ENCODE measurements at regions of chr14 and their contacts with region 1.

Region 1: DNA sequence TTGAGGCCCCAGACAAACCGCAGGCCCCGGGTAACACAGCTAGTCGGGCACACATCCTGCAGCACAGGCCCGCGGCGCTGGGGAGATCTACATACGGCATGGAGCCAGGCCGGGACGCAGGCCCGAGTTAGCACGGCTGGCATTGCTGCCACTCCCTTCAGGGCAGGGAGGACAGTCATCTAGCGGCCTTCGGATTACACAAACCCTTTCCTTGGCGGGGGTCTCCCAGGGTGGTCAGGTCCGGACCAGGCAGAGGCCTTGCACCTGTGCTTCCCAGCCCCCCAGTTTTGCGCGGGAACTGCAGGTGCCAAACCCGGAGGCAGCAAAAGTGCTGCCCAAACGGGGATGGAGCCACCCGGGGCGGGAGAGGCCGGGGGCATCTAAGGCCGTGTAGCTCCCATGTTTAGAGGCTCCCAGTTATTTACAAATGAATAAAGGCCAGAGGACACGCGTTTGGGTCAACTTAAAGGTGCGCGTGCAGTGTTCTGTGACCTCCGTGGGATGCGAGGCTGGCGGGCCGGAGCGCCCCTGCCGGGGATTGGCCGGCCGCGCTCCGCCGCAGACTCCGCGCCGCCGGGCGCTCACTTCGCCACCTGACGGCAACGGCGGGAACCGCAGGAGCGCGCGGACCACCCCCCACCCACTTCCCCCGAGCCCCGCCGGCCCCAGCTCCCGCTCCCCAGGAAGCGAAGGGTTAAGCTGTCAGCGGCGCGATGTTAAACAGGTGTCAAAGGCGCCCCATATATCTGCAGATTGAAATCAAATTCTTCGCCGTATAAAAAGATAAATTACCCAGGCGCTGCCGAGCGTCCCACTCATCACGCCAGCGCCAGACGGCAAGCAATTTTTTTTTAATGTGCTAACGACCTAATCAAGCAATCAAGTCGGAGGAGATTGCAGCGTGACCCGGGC is 18.1 kb downstream of the VSX2 start:
- DNase-seq: no peak
- H3K4me3 ChIP-seq: peak overlapping the region; percentile 58
- CTCF ChIP-seq: peak; percentile 80

Region 2: GRCh38 chr14:72350215-72350614 is 1907.1 kb before region 1 on chr14:
- CTCF ChIA-PET with region 1: no interaction called
- POLR2A ChIA-PET with region 1: no interaction called
- DNase-seq: no peak
- H3K4me3 ChIP-seq: no peak overlapping the region
- CTCF ChIP-seq: no peak

Region 3: DNA sequence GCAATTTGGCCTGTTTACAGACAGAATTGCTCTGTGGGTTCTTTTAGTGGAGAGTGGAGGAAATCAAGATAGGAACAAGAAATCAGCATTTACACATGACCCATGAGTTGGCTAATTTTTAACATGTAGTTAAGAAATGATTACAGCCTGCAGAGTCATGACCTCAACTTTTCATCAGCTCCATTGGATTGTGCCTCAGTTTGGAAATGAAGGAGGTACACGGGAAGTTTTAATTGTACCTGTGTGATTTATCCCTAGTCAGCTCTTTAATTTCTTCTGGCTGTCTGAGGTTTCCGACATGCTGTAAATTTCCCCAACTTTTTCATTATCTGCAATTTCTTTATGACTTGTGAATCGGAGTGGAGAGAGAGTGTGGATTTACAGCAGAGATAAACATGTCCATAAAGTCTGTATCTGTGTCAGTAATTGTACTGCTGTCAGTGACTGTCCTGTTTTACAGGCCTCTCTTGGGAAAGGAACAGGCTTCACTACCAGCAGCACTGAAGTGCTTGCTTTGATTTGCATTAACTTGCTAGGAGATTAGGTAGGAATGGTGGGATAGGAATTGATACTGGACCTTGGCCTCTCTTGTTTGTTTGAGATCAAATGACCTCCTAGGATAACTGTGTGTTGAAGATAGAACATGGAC is 123.4 kb before region 1 on chr14:
- CTCF ChIA-PET with region 1: interaction called, 11 read pairs
- POLR2A ChIA-PET with region 1: no interaction called
- DNase-seq: no peak
- H3K4me3 ChIP-seq: no peak overlapping the region
- CTCF ChIP-seq: no peak

Region 4: DNA sequence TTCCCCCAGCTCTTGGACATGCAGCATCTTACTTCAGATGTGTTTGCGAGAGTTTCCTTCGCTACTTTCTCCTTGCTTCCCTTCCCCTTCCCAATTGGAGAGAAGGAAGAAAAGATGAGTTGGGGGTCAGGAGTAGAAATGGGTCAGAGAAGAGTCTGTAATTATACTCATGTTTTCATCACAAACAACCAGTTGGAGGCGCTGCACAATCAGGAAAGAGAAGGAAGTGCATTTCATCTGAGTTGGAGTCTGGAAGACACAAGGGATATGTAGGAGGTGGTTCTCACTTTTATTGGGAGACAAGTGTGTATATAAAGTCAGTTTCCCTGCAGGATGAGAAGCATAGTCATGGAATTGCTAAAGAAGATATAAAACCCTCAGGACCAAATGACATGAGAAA is 49.4 kb before region 1 on chr14:
- CTCF ChIA-PET with region 1: interaction called, 12 read pairs
- POLR2A ChIA-PET with region 1: no interaction called
- DNase-seq: no peak
- H3K4me3 ChIP-seq: no peak overlapping the region
- CTCF ChIP-seq: no peak

Region 5: GRCh38 chr14:74223016-74223415 is 34.3 kb before region 1 on chr14:
- CTCF ChIA-PET with region 1: interaction called, 20 read pairs
- POLR2A ChIA-PET with region 1: no interaction called
- DNase-seq: no peak
- H3K4me3 ChIP-seq: no peak overlapping the region
- CTCF ChIP-seq: no peak

Region 6: DNA sequence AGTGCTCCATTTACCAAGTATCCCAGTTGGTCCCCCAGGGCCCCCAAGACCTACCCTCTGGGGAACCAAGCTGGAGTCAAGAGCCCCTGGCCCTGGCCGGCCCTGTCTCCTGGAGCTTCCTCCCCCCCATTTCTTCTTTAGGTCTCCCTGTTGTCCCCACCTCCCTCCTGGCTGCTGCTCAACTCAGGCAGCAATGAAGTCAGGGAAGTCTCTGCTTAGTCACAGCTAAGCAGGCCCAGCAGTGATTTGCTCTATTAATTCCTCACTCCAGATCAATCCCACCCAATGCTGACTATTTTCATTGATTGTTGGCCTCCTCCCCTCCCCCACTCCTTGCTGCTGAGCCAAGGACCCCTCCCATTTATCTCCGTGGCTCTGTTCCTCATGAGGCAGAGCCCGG is 10.3 kb after region 1 on chr14:
- CTCF ChIA-PET with region 1: interaction called, 101 read pairs
- POLR2A ChIA-PET with region 1: no interaction called
- DNase-seq: no peak
- H3K4me3 ChIP-seq: no peak overlapping the region
- CTCF ChIP-seq: no peak

Region 7: GRCh38 chr14:74281069-74281468 is 23.7 kb after region 1 on chr14:
- CTCF ChIA-PET with region 1: interaction called, 14 read pairs
- POLR2A ChIA-PET with region 1: no interaction called
- DNase-seq: no peak
- H3K4me3 ChIP-seq: no peak overlapping the region
- CTCF ChIP-seq: no peak

Measured in AG04449 (cell line).